Heart left ventricle (tissue), 16 donors: ENCODE measurements at regions of chr4 and their contacts with region 1.

Region 1: GRCh38 chr4:48127682-48128394 is 6.2 kb downstream of the TXK start:
- DNase-seq: peak; percentile 49 to 67 (median 53)
- ATAC-seq: peak; percentile 65 to 87 (median 86)
- H3K4me3 ChIP-seq: peak overlapping the region in 5 of 12 donors; percentile 10 to 42 (median 29)
- H3K27ac ChIP-seq: peak overlapping the region in 8 of 12 donors; percentile 6 to 67 (median 40)
- H3K4me1 ChIP-seq: peaks cover 0 to 51% (median 23%) of the 10 kb centered on the region in 12 donors
- H3K27me3 ChIP-seq: no peaks in the 10 kb centered on the region
- CTCF ChIP-seq: peak; percentile 37 to 68 (median 54)
- POLR2A ChIP-seq: no peak

Region 2: GRCh38 chr4:48254381-48255071 is 126.7 kb after region 1 on chr4:
- intact Hi-C with region 1: loop called in 1 of 10 experiments (anchors 10 kb)
- DNase-seq: peak in 4 of 5 donors; percentile 70 to 76 (median 72)
- ATAC-seq: peak; percentile 80 to 87 (median 86)
- H3K4me3 ChIP-seq: peak overlapping the region in 6 of 12 donors; percentile 0 to 34 (median 18)
- H3K27ac ChIP-seq: peak overlapping the region in 10 of 12 donors; percentile 34 to 78 (median 50)
- H3K4me1 ChIP-seq: peaks cover 0 to 39% (median 15%) of the 10 kb centered on the region in 12 donors
- H3K27me3 ChIP-seq: no peaks in the 10 kb centered on the region
- CTCF ChIP-seq: no peak
- POLR2A ChIP-seq: no peak

Region 3: GRCh38 chr4:48269861-48270522 is 142.2 kb after region 1 on chr4:
- intact Hi-C with region 1: loop called in 8 of 10 experiments (anchors 5 to 10 kb)
- DNase-seq: peak; percentile 92 to 96 (median 94)
- ATAC-seq: peak; percentile 98 to 99 (median 98)
- H3K4me3 ChIP-seq: peak overlapping the region; percentile 69 to 92 (median 84)
- H3K27ac ChIP-seq: peak overlapping the region in 11 of 12 donors; percentile 73 to 91 (median 83)
- H3K4me1 ChIP-seq: peaks cover 0 to 37% (median under 1%) of the 10 kb centered on the region in 12 donors
- H3K27me3 ChIP-seq: no peaks in the 10 kb centered on the region
- CTCF ChIP-seq: peak in 9 of 12 donors; percentile 6 to 49 (median 32)
- POLR2A ChIP-seq: peak in 1 of 2 donors; percentile 22

Region 4: DNA sequence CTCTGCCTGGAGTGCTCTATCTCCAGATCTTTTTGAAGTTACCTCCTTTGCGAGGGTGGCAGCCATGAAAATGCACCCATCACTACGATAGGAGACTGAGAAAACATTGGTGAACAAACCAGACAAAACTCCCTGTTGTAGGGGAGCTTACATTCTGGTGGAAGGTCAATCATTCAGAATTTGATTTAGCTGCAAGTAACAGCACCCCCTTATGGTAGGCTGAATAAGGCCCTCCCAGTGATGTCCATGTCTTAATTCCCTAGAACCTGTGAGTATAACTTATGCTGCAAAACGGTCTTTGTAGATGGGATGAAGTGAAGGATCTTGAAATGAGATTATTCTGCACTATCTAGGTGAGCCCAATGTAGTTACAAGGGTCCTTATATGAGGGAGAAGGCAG is 147.4 kb after region 1 on chr4:
- intact Hi-C with region 1: loop called in 8 of 10 experiments (anchors 5 to 10 kb)
- DNase-seq: no peak
- ATAC-seq: peak in 2 of 4 donors; percentile 45 to 69
- H3K4me3 ChIP-seq: no peak overlapping the region
- H3K27ac ChIP-seq: no peak overlapping the region
- H3K4me1 ChIP-seq: peaks cover 0 to 7% (median 0%) of the 10 kb centered on the region in 12 donors
- H3K27me3 ChIP-seq: no peaks in the 10 kb centered on the region
- CTCF ChIP-seq: peak in 11 of 12 donors; percentile 23 to 55 (median 43)
- POLR2A ChIP-seq: no peak

Region 5: DNA sequence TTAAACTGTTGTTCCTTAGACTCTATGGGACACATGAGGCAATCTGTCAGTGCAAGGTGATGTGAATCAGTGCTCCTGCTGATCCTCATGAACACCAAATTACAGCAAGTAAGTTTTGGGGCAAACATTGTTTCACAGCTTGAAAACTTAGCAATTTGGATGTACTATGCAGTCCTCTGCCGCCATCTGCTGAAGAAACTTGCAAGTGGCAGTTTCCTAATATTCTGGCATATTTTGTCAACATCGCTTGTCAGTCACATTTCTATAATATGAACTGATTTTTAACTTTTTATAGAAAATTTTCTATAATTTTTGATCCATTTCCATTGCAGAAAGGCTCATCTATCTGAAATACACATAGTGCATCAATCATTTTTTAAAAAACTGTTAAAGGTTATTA is 418.5 kb after region 1 on chr4:
- intact Hi-C with region 1: loop called in 2 of 10 experiments (anchors 5 to 10 kb)
- DNase-seq: no peak
- ATAC-seq: no peak
- H3K4me3 ChIP-seq: no peak overlapping the region
- H3K27ac ChIP-seq: no peak overlapping the region
- H3K4me1 ChIP-seq: no peaks in the 10 kb centered on the region
- H3K27me3 ChIP-seq: no peaks in the 10 kb centered on the region
- CTCF ChIP-seq: peak; percentile 25 to 71 (median 48)
- POLR2A ChIP-seq: no peak